ENCODE measurements at regions of chr10 and their contacts with region 1.

Region 1: DNA sequence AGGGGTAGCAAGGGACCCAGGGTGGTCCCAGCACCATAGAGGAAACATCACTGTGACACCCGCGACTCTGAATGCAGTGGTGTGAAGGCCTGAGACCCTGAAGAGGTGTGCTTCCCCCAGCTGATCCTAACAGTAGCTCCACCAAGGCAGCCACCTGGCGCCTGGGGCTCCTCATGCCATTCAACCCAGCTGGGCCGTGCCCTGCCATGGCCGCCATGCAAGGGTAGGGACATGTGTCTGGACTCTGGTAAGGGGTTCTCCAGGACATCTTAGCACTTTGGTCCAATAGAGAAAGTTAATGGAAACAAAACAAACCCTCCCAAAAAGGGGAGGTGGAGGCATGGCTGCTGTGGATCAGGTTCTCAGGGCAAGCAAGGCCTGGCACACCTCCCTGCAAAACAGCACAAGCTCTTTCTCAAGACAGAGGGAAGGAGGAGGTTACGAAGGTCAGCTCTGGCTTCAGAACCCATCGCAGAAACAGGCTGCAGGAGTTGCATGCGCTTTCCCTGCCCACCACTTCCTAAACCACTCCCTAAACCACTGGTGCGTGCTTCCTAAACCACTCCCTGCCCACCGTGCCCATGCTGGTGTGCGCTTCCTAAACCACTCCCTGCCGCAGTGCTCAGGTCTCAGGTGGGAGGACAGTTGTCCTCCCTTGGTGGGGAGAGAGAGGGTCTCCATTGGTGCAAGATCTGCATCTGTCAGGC is 108.7 kb downstream of the LARP4B start:
- DNase-seq: peak in 1 of 14 experiments; percentile 6
- ATAC-seq: no peak
- H3K4me3 ChIP-seq: no peak overlapping the region
- H3K4me3 Mint-ChIP-seq: no peak overlapping the region
- H3K27ac ChIP-seq: no peak overlapping the region
- H3K27ac Mint-ChIP-seq: peak overlapping the region; percentile 76
- H3K4me1 ChIP-seq: peaks cover 18% of the 10 kb centered on the region
- H3K4me1 Mint-ChIP-seq: peaks cover 27% of the 10 kb centered on the region
- H3K27me3 ChIP-seq: no peaks in the 10 kb centered on the region
- H3K27me3 Mint-ChIP-seq: no peaks in the 10 kb centered on the region
- CTCF ChIP-seq: no peak

Region 2: DNA sequence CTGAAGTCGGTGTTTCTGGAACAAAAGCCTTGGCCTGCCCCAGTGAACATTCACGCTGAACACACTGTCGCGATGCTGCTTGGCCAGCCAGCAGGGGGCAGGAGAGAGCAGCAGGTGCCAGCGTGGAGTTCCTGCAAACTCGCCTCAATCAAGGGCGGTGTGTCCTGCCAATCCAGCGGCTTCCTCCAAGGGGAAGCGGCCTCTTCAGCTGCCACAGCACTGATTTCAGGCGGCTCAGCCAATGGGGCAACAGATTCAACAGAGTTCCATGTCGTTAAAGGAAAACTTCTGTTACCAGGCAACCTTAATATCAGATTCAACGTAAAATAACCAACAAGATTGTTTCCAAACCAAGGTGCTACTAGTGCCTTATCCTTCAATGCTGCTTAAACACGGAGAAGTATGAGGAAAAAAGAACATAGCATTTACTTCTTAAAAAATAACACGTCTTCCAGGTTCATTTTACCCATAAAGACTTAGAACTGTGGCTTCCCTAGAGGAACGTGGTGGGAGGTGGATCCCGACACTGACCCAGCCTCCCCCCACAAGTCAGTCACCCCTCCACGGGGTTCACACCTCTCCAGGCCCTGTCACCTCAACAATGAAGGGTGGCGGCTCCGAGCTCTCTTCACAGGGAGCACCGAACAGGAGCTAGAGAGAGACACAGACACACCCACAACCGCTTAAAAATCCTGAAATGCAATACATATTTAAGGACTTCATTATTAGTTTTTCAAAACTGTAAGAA is 311.5 kb before region 1 on chr10:
- CTCF ChIA-PET with region 1: no interaction called
- POLR2A ChIA-PET with region 1: no interaction called
- intact Hi-C with region 1: loop called in 1 of 2 experiments (anchors 10 kb)
- DNase-seq: peak; percentile 66 to 88 (median 74)
- ATAC-seq: peak; percentile 94
- H3K4me3 ChIP-seq: no peak overlapping the region
- H3K4me3 Mint-ChIP-seq: no peak overlapping the region
- H3K27ac ChIP-seq: no peak overlapping the region
- H3K27ac Mint-ChIP-seq: no peak overlapping the region
- H3K4me1 ChIP-seq: peaks cover 13% of the 10 kb centered on the region
- H3K4me1 Mint-ChIP-seq: peaks cover 16% of the 10 kb centered on the region
- H3K27me3 ChIP-seq: peaks cover 0 to 4% of the 10 kb centered on the region in 2 experiments
- H3K27me3 Mint-ChIP-seq: no peaks in the 10 kb centered on the region
- CTCF ChIP-seq: peak; percentile 94

Region 3: GRCh38 chr10:987870-988666 is 165.3 kb after region 1 on chr10 and contains the start of gene GTPBP4:
- CTCF ChIA-PET with region 1: no interaction called
- POLR2A ChIA-PET with region 1: no interaction called
- intact Hi-C with region 1: no loop called
- DNase-seq: peak; percentile 90 to 99 (median 96)
- ATAC-seq: peak; percentile 94
- H3K4me3 ChIP-seq: peak within 1 kb of the TSS; percentile 85
- H3K4me3 Mint-ChIP-seq: peak within 1 kb of the TSS; percentile 100
- H3K27ac ChIP-seq: peak within 1 kb of the TSS; percentile 73 to 74
- H3K27ac Mint-ChIP-seq: peak within 1 kb of the TSS; percentile 99
- H3K4me1 ChIP-seq: peaks cover 23% of the 10 kb centered on the region
- H3K4me1 Mint-ChIP-seq: peaks cover 46% of the 10 kb centered on the region
- H3K27me3 ChIP-seq: no peaks in the 10 kb centered on the region
- H3K27me3 Mint-ChIP-seq: no peaks in the 10 kb centered on the region
- CTCF ChIP-seq: peak; percentile 12
- total RNA-seq, gene GTPBP4: 50.3 to 53.7 TPM

Region 4: GRCh38 chr10:1074748-1075308 is 252.0 kb after region 1 on chr10:
- CTCF ChIA-PET with region 1: no interaction called
- POLR2A ChIA-PET with region 1: no interaction called
- intact Hi-C with region 1: loop called in 1 of 2 experiments (anchors 10 kb)
- DNase-seq: peak in 4 of 14 experiments; percentile 9 to 41 (median 36)
- ATAC-seq: no peak
- H3K4me3 ChIP-seq: no peak overlapping the region
- H3K4me3 Mint-ChIP-seq: no peak overlapping the region
- H3K27ac ChIP-seq: no peak overlapping the region
- H3K27ac Mint-ChIP-seq: peak overlapping the region; percentile 5
- H3K4me1 ChIP-seq: peaks cover 5% of the 10 kb centered on the region
- H3K4me1 Mint-ChIP-seq: peaks cover 21% of the 10 kb centered on the region
- H3K27me3 ChIP-seq: no peaks in the 10 kb centered on the region
- H3K27me3 Mint-ChIP-seq: no peaks in the 10 kb centered on the region
- CTCF ChIP-seq: peak; percentile 18

Measured in CD4-positive, alpha-beta T cell (primary cell).